Activated CD4-positive, alpha-beta T cell treated with anti-CD3 and anti-CD28 coated beads for 36 hours (primary cell): ENCODE measurements at regions of chr1 and their contacts with region 1.

Region 1: DNA sequence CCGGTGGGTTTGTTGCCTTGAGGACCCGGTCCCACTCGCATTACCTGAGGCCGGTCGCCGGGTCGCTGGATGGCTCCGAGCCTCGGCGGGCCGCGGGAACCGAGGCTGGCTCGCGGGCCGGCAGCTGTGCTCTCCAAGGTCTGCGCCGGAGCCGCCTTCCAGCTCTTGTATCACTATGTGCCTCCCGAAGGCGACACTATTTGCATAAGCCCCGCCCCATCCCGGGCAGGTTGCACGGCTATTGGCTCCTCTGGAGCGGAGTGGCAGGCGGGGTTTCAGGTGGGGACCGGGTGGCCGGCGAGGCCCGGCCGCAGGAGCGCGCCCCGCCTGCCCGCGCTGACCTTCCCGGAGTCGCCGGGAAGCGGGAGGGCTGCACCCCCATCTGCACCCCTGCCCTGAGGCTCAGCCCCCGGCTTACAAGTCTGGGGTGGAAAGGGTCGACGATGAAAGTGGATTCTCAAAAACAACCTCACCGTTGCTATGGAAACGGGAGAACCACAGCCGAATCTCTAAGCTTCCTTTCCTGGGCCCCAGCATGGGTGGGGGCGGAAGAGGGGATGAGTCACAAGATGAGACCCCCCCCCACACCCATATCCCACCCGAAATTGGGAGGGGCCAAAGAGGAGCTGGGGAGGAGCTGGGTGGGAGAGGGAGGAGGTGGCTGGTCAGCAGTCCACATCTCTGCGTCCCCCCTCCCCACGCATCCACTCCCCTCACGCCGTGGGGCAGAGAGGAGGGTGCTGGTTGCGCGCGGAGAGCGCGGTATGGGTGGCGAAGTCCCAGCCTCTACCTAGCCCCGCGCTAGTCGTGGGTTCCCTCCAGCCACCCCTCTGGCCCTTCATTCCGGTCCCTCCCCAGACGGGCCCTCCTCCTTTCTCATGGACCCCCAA is at the start of gene HPCAL4:
- DNase-seq: peak; percentile 91
- ATAC-seq: peak; percentile 94
- H3K4me3 Mint-ChIP-seq: peak within 1 kb of the TSS; percentile 68
- H3K27ac Mint-ChIP-seq: no peak within 1 kb of the TSS
- H3K4me1 Mint-ChIP-seq: peaks cover 36% of the 10 kb centered on the region
- H3K27me3 Mint-ChIP-seq: peaks cover 17% of the 10 kb centered on the region
- total RNA-seq, gene HPCAL4: 0.94 to 1.1 TPM

Region 2: GRCh38 chr1:39344394-39345154 is 346.9 kb before region 1 on chr1:
- CTCF ChIA-PET with region 1: no interaction called
- POLR2A ChIA-PET with region 1: no interaction called
- intact Hi-C with region 1: no loop called
- DNase-seq: no peak
- ATAC-seq: no peak
- H3K4me3 Mint-ChIP-seq: no peak overlapping the region
- H3K27ac Mint-ChIP-seq: no peak overlapping the region
- H3K4me1 Mint-ChIP-seq: no peaks in the 10 kb centered on the region
- H3K27me3 Mint-ChIP-seq: no peaks in the 10 kb centered on the region

Region 3: DNA sequence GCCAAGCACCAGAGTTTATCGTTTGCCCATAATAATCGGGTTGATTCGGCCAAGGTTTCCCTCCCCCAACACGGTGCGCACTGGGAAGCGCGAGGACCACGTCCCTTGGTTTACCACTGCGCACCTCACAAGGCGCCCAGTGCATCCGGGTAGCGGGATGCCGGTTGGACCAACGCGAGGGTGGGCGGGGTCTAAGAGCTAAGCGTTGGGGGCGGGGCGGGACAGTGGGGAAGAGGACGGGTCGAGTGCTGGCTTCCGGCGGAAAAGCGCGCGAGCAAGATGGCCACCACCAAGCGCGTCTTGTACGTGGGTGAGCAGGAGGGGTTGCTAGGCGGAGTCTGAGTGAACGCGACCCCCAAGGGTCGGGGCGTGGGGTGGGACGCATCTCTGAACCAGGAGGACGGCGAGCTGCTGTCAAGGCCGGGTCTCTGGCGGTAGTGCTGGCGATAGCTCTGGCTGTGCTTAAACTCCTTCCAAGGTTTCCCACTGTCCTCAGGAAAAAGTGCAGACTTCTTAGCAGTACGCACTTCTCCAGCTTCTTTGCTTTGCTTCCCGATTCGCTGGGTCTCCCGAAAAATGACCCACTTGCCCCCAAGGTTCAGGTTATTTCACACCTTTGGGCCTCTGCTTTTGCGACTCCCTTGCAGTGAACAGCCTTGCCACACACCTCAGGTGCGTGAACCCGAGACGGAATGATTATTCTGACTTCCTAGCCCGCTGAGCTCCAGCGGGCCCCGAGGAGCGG is 47.3 kb after region 1 on chr1 and contains the start of gene PPIE:
- CTCF ChIA-PET with region 1: no interaction called
- POLR2A ChIA-PET with region 1: no interaction called
- intact Hi-C with region 1: loop called in 1 of 2 experiments (anchors 1 kb)
- DNase-seq: peak; percentile 99
- ATAC-seq: peak; percentile 98
- H3K4me3 Mint-ChIP-seq: peak within 1 kb of the TSS; percentile 96
- H3K27ac Mint-ChIP-seq: peak within 1 kb of the TSS; percentile 94
- H3K4me1 Mint-ChIP-seq: peaks cover 36% of the 10 kb centered on the region
- H3K27me3 Mint-ChIP-seq: peaks cover 7% of the 10 kb centered on the region
- total RNA-seq, gene PPIE: 55.3 to 70.4 TPM